ENCODE measurements at regions of chr10 and their contacts with region 1.

Region 1: DNA sequence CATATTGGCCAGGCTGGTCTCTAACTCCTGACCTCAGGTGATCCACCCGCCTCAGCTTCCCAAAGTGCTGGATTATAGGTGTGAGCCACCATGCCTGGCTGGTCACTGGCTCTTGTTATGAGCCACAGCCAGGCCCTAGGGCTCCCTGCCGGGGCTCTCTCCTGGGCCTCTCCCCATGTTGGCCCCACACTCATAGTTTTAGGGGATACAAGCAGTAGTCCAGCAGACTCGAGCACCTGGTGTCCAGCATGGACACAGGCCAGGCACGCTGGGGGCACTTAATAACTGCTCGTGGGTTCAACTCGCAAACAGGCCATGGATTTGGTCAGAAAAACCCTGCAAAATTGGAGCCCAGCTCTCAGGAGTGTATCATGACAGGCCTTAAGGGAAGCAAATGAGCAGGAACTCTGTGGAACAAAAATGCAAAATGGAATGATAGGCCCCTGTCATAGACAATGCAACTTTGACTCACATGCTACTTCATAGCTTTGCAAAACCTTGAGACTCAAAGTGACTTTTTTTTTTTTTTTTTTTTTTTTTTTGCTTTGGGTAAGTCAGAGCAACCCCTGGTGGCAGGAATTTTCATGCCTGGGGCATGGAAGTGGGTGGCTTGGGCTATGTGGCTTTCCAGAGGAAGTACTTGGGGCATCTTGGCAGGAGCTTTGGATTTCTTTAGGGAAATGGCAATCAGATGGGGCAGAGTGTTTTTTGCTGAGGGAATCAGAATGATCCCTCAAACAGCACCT is 62.5 kb downstream of the TACC2 start:
- DNase-seq: peak; percentile 80
- H3K4me3 ChIP-seq: no peak overlapping the region
- H3K27ac ChIP-seq: peak overlapping the region; percentile 58 to 68 (median 66)
- H3K4me1 ChIP-seq: peaks cover 0 to 20% (median 11%) of the 10 kb centered on the region in 4 donors
- H3K27me3 ChIP-seq: no peaks in the 10 kb centered on the region
- CTCF ChIP-seq: peak in 3 of 4 experiments; percentile 53 to 73 (median 61)
- EP300 ChIP-seq: no peak
- POLR2A ChIP-seq: no peak

Region 2: DNA sequence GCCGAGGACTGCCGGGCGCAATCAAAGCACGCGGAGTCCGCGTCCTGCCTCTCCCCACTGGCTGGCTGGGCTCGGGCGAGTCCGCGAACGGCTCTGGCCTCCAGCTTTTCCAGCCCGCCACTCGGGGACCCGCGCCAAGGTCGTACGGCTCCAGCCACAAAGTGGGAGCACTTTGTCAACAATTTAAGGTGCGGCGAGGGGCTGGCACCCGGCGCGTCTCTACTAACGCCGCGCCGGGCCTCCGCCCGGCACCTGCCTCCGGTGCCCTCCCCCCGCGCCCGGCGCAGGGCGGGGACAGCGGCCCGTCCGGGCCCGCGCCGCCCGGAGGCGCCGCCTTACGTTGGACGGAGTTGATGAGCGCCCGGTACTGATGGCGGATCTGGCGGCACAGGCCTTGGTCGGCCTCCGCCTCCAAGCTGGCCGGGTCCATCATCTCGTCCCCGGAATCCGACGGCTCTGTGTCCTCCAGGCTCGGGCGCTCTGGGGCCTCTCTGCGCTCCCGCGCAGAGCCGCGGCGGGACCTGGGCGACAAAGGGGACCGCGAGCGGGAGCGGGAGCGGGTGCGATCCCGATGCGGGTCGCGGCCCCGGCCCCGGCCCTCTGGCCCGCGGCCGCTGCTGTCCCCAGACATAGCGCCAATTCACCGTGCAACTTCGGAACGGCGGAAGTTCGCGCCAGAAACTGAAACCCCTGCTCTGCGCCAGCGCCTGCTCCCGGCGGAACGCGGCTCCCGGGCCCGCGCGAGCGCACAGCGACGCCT is 76.7 kb before region 1 on chr10 and contains the start of gene NSMCE4A:
- intact Hi-C with region 1: loop called (anchors 2 kb)
- DNase-seq: peak; percentile 89
- H3K4me3 ChIP-seq: peak within 1 kb of the TSS; percentile 72 to 92 (median 82)
- H3K27ac ChIP-seq: peak within 1 kb of the TSS; percentile 96 to 98 (median 97)
- H3K4me1 ChIP-seq: peaks cover 0 to 30% (median 27%) of the 10 kb centered on the region in 4 donors
- H3K27me3 ChIP-seq: no peaks in the 10 kb centered on the region
- CTCF ChIP-seq: no peak
- EP300 ChIP-seq: no peak
- POLR2A ChIP-seq: no peak
- total RNA-seq, gene NSMCE4A: 104 to 160 (median 118) TPM

Region 3: GRCh38 chr10:122252805-122253204 is 201.4 kb after region 1 on chr10:
- intact Hi-C with region 1: no loop called
- DNase-seq: peak; percentile 72
- H3K4me3 ChIP-seq: no peak overlapping the region
- H3K27ac ChIP-seq: peak overlapping the region in 3 of 4 donors; percentile 43 to 67 (median 54)
- H3K4me1 ChIP-seq: peaks cover 0 to 22% (median 11%) of the 10 kb centered on the region in 4 donors
- H3K27me3 ChIP-seq: no peaks in the 10 kb centered on the region
- CTCF ChIP-seq: no peak
- EP300 ChIP-seq: peak in 2 of 4 donors; percentile 43 to 89
- POLR2A ChIP-seq: no peak